CD4-positive, alpha-beta memory T cell (primary cell): ENCODE measurements at regions of chr15 and their contacts with region 1.

Region 1: GRCh38 chr15:45198337-45199135 is 10.8 kb upstream of the SHF start:
- DNase-seq: peak; percentile 97 to 98 (median 98)
- H3K4me3 ChIP-seq: peak overlapping the region; percentile 72 to 97
- H3K4me3 Mint-ChIP-seq: no peak overlapping the region
- H3K27ac ChIP-seq: peak overlapping the region; percentile 86
- H3K27ac Mint-ChIP-seq: no peak overlapping the region
- H3K4me1 ChIP-seq: peaks cover 18% of the 10 kb centered on the region
- H3K4me1 Mint-ChIP-seq: peaks cover 0 to 19% (median 10%) of the 10 kb centered on the region in 4 donors
- H3K27me3 ChIP-seq: no peaks in the 10 kb centered on the region
- H3K27me3 Mint-ChIP-seq: peaks cover 0 to 9% of the 10 kb centered on the region in 2 donors

Region 2: GRCh38 chr15:44286814-44287452 is 911.6 kb before region 1 on chr15:
- CTCF ChIA-PET with region 1: no interaction called
- POLR2A ChIA-PET with region 1: interaction called, 3 read pairs
- intact Hi-C with region 1: loop called (anchors 2 kb)
- DNase-seq: peak in 3 of 5 donors; percentile 13 to 31 (median 15)
- H3K4me3 ChIP-seq: peak overlapping the region; percentile 92 to 99
- H3K4me3 Mint-ChIP-seq: peak overlapping the region; percentile 89 to 99 (median 95)
- H3K27ac ChIP-seq: peak overlapping the region; percentile 82
- H3K27ac Mint-ChIP-seq: peak overlapping the region; percentile 96 to 100 (median 99)
- H3K4me1 ChIP-seq: peaks cover 36% of the 10 kb centered on the region
- H3K4me1 Mint-ChIP-seq: peaks cover 26 to 53% (median 39%) of the 10 kb centered on the region in 4 donors
- H3K27me3 ChIP-seq: no peaks in the 10 kb centered on the region
- H3K27me3 Mint-ChIP-seq: peaks cover 6 to 9% of the 10 kb centered on the region in 2 donors

Region 3: GRCh38 chr15:44775953-44776352 is 422.6 kb before region 1 on chr15:
- CTCF ChIA-PET with region 1: no interaction called
- POLR2A ChIA-PET with region 1: no interaction called
- intact Hi-C with region 1: no loop called
- DNase-seq: no peak
- H3K4me3 ChIP-seq: no peak overlapping the region
- H3K4me3 Mint-ChIP-seq: no peak overlapping the region
- H3K27ac ChIP-seq: no peak overlapping the region
- H3K27ac Mint-ChIP-seq: no peak overlapping the region
- H3K4me1 ChIP-seq: no peaks in the 10 kb centered on the region
- H3K4me1 Mint-ChIP-seq: peaks cover 0 to 2% (median 0%) of the 10 kb centered on the region in 4 donors
- H3K27me3 ChIP-seq: no peaks in the 10 kb centered on the region
- H3K27me3 Mint-ChIP-seq: no peaks in the 10 kb centered on the region

Region 4: DNA sequence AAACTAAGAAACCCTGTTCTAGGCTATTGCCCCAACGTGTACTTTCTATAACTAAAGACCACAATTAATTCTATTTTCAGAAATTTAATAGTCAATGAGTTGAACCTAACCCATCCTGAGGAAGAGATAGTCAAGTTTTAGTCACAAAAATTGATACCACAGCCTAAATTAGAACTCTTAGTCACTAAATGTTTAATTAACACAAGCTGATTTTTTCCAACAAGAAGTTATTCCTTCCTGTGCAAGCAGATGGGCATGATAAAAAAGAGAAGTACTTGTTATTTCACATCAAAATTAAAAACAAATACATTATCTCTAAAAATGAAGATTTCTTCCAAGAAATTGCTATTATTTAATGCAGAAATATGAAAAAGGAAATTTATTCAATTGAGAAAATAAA is 280.4 kb before region 1 on chr15:
- CTCF ChIA-PET with region 1: no interaction called
- POLR2A ChIA-PET with region 1: no interaction called
- intact Hi-C with region 1: no loop called
- DNase-seq: no peak
- H3K4me3 ChIP-seq: no peak overlapping the region
- H3K4me3 Mint-ChIP-seq: no peak overlapping the region
- H3K27ac ChIP-seq: no peak overlapping the region
- H3K27ac Mint-ChIP-seq: no peak overlapping the region
- H3K4me1 ChIP-seq: no peaks in the 10 kb centered on the region
- H3K4me1 Mint-ChIP-seq: no peaks in the 10 kb centered on the region
- H3K27me3 ChIP-seq: no peaks in the 10 kb centered on the region
- H3K27me3 Mint-ChIP-seq: no peaks in the 10 kb centered on the region

Region 5: GRCh38 chr15:45166834-45167630 is 31.5 kb before region 1 on chr15:
- CTCF ChIA-PET with region 1: interaction called, 35 read pairs
- POLR2A ChIA-PET with region 1: interaction called, 69 read pairs
- intact Hi-C with region 1: loop called (anchors 1 kb)
- DNase-seq: peak; percentile 76 to 83 (median 80)
- H3K4me3 ChIP-seq: peak overlapping the region; percentile 61 to 64
- H3K4me3 Mint-ChIP-seq: peak overlapping the region; percentile 62 to 85 (median 76)
- H3K27ac ChIP-seq: peak overlapping the region; percentile 83
- H3K27ac Mint-ChIP-seq: peak overlapping the region; percentile 75 to 92 (median 78)
- H3K4me1 ChIP-seq: peaks cover 21% of the 10 kb centered on the region
- H3K4me1 Mint-ChIP-seq: peaks cover 0 to 18% (median 6%) of the 10 kb centered on the region in 4 donors
- H3K27me3 ChIP-seq: no peaks in the 10 kb centered on the region
- H3K27me3 Mint-ChIP-seq: no peaks in the 10 kb centered on the region

Region 6: GRCh38 chr15:45187894-45188830 is 10.4 kb before region 1 on chr15 and contains the start of gene SHF:
- CTCF ChIA-PET with region 1: interaction called, 18 read pairs
- POLR2A ChIA-PET with region 1: interaction called, 201 read pairs
- intact Hi-C with region 1: loop called (anchors 1 kb)
- DNase-seq: peak; percentile 49 to 78 (median 56)
- H3K4me3 ChIP-seq: peak within 1 kb of the TSS; percentile 67 to 90
- H3K4me3 Mint-ChIP-seq: peak within 1 kb of the TSS; percentile 86 to 97 (median 93)
- H3K27ac ChIP-seq: peak within 1 kb of the TSS; percentile 66
- H3K27ac Mint-ChIP-seq: peak within 1 kb of the TSS; percentile 77 to 95 (median 94)
- H3K4me1 ChIP-seq: peaks cover 7% of the 10 kb centered on the region
- H3K4me1 Mint-ChIP-seq: peaks cover 9 to 23% (median 13%) of the 10 kb centered on the region in 4 donors
- H3K27me3 ChIP-seq: no peaks in the 10 kb centered on the region
- H3K27me3 Mint-ChIP-seq: no peaks in the 10 kb centered on the region
- total RNA-seq, gene SHF: 5.3 to 6.7 TPM

Region 7: DNA sequence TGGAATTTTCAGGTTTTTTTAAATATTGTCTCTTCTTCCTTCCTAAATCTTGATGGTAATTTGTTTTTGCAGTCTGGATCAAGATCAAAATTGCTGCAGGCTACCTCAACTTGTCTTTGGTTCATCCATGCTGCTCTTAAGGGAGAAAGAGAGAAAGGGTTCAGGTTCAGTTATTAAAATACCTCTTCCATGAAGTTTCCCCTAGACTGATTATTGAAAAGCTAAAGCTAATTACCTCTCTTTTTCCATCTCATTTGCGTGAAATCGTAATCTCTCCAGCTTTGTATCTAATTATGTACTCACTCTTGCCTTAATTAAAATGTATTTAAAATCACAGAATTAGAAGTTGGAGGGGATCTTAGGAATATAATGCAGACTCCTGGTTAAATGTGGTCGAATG is 106.2 kb after region 1 on chr15:
- CTCF ChIA-PET with region 1: no interaction called
- POLR2A ChIA-PET with region 1: no interaction called
- intact Hi-C with region 1: no loop called
- DNase-seq: no peak
- H3K4me3 ChIP-seq: no peak overlapping the region
- H3K4me3 Mint-ChIP-seq: no peak overlapping the region
- H3K27ac ChIP-seq: no peak overlapping the region
- H3K27ac Mint-ChIP-seq: no peak overlapping the region
- H3K4me1 ChIP-seq: peaks cover 5% of the 10 kb centered on the region
- H3K4me1 Mint-ChIP-seq: peaks cover 4 to 10% (median 6%) of the 10 kb centered on the region in 4 donors
- H3K27me3 ChIP-seq: peaks cover 4% of the 10 kb centered on the region
- H3K27me3 Mint-ChIP-seq: peaks cover 13 to 26% of the 10 kb centered on the region in 2 donors

Region 8: DNA sequence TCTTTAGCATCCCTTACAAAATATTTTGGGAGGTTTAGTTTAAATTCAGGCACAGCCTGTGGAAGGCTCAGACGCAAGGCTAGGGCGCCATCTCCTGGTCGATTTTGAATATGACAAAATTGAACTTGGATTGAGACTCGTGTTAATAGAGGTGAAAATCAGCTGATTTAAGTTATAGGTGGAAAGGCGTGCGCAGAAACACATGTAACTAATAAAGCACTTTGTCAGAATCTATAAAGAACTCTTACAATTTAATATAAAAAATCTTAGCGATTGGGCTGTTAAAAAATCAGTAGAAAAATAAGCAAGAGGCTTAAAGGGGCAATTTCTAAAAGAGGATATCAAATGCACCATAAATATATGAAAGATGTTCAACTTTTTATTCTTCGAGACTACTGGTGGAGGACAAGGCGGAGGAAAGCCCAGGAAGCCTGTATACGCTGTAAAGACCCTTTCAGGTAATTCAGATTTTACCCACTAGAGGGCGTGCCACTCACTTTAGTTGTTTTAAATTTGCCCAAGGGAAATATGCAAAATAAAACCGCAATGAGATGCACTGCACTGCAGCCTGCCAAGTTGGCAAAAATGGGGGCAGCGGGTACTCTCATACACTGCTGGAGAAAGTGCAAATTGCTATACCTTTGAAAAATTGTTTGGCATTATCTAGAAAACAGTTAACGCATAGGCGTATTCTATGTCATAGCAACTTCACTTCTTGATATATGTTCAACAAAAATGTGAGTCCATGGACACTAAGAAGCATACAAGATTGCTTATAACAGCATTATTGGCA is 259.3 kb after region 1 on chr15:
- CTCF ChIA-PET with region 1: no interaction called
- POLR2A ChIA-PET with region 1: interaction called, 5 read pairs
- intact Hi-C with region 1: loop called (anchors 1 kb)
- DNase-seq: peak; percentile 79 to 84 (median 81)
- H3K4me3 ChIP-seq: peak overlapping the region; percentile 21 to 51
- H3K4me3 Mint-ChIP-seq: peak overlapping the region; percentile 86 to 94 (median 88)
- H3K27ac ChIP-seq: peak overlapping the region; percentile 61
- H3K27ac Mint-ChIP-seq: peak overlapping the region; percentile 89 to 98 (median 96)
- H3K4me1 ChIP-seq: peaks cover 48% of the 10 kb centered on the region
- H3K4me1 Mint-ChIP-seq: peaks cover 34 to 51% (median 41%) of the 10 kb centered on the region in 4 donors
- H3K27me3 ChIP-seq: no peaks in the 10 kb centered on the region
- H3K27me3 Mint-ChIP-seq: no peaks in the 10 kb centered on the region

Region 9: DNA sequence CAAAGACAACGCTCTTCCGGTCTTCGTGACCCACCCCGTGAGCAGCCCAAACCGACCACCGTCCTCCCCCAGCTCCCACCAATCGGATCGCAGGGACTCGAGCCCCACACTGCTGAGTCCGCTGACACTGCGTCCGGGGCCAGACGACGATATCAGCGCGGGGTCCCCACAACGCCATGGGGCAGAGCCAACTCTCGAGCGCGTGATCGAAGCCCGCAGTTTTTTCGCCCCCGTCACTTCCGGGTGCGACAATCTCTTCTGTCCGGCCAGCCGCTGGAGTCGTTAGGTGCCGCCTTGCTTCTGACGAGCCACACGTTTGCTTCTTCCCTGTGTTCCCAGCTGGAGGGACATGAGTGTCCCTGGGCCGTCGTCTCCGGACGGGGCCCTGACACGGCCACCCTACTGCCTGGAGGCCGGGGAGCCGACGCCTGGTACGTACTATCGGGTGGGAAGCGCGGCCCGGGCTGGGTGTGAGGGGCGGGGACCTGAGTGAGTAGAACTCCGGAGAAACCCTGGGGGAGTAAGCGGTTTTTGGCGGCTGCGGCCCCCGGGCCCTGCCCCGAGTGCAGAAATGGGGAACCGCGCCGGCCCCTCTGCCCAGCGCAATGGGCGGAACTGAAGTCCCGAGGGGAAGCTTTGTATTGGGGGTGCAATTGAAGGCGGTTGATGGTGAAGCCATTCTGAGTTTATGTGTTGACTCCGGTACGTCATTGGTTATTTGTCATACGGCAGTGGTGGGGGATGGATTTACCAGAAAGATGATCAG is 388.7 kb after region 1 on chr15 and contains the start of gene BLOC1S6:
- CTCF ChIA-PET with region 1: interaction called, 4 read pairs
- POLR2A ChIA-PET with region 1: interaction called, 11 read pairs
- intact Hi-C with region 1: loop called (anchors 1 kb)
- DNase-seq: peak; percentile 87 to 91 (median 90)
- H3K4me3 ChIP-seq: peak within 1 kb of the TSS; percentile 89 to 99
- H3K4me3 Mint-ChIP-seq: peak within 1 kb of the TSS; percentile 96 to 100 (median 100)
- H3K27ac ChIP-seq: peak within 1 kb of the TSS; percentile 95
- H3K27ac Mint-ChIP-seq: peak within 1 kb of the TSS; percentile 100
- H3K4me1 ChIP-seq: peaks cover 44% of the 10 kb centered on the region
- H3K4me1 Mint-ChIP-seq: peaks cover 20 to 48% (median 37%) of the 10 kb centered on the region in 4 donors
- H3K27me3 ChIP-seq: no peaks in the 10 kb centered on the region
- H3K27me3 Mint-ChIP-seq: no peaks in the 10 kb centered on the region
- total RNA-seq, gene BLOC1S6: 43.0 to 43.9 TPM